ENCODE measurements at regions of chr16 and their contacts with region 1.

Region 1: GRCh38 chr16:58629572-58630104 is at the start of gene CNOT1:
- DNase-seq: peak; percentile 95 to 99 (median 98)
- H3K4me3 ChIP-seq: peak within 1 kb of the TSS; percentile 68 to 100 (median 96)
- H3K27ac ChIP-seq: peak within 1 kb of the TSS; percentile 88 to 100 (median 98)
- H3K27me3 ChIP-seq: no peaks in the 10 kb centered on the region
- CTCF ChIP-seq: peak in 6 of 56 donors; percentile 4 to 17 (median 9)
- total RNA-seq, gene CNOT1: 71.0 to 135 (median 100) TPM

Region 2: GRCh38 chr16:58392215-58393137 is 237.2 kb before region 1 on chr16 and contains the start of gene GINS3:
- intact Hi-C with region 1: loop called in 1 of 2 experiments (anchors 2 kb)
- DNase-seq: peak; percentile 83 to 94 (median 92)
- H3K4me3 ChIP-seq: peak within 1 kb of the TSS; percentile 56 to 100 (median 91)
- H3K27ac ChIP-seq: peak within 1 kb of the TSS in 54 of 59 donors; percentile 1 to 87 (median 63)
- H3K27me3 ChIP-seq: no peaks in the 10 kb centered on the region
- CTCF ChIP-seq: peak in 22 of 56 donors; percentile 4 to 42 (median 19)
- total RNA-seq, gene GINS3: 1.6 to 9.8 (median 3.4) TPM

Region 3: DNA sequence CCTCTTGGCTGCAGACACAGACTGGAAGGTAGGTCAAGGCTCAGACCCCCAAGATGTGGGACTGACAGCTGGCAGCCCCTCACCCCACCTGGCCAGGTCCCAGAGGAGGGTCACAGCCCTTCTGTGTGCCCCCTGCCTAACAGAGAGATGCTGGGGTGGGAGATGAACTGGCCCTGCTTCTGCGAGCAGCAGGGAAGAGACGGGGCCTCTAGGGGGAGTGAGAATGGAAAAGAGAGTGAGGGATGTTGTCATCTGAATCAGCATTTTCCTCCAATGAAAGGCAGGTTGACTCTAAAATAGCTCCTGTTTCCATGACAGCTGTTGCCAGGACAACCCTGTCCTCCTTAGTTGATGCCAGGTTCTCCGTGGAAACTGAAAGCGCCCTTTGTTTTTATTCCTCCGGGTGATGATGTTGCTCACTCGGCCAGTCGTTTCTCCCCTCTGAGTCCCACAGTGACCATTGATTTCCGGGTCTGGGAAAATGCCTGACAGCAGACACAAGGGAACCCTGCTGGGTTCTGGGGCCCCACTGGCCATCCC is 134.6 kb before region 1 on chr16:
- intact Hi-C with region 1: loop called in 1 of 2 experiments (anchors 5 kb)
- DNase-seq: peak in 9 of 10 donors; percentile 78 to 97 (median 89)
- H3K4me3 ChIP-seq: peak overlapping the region in 58 of 59 donors; percentile 5 to 64 (median 44)
- H3K27ac ChIP-seq: peak overlapping the region; percentile 81 to 100 (median 97)
- H3K27me3 ChIP-seq: no peaks in the 10 kb centered on the region
- CTCF ChIP-seq: peak in 55 of 56 donors; percentile 41 to 78 (median 66)

Region 4: DNA sequence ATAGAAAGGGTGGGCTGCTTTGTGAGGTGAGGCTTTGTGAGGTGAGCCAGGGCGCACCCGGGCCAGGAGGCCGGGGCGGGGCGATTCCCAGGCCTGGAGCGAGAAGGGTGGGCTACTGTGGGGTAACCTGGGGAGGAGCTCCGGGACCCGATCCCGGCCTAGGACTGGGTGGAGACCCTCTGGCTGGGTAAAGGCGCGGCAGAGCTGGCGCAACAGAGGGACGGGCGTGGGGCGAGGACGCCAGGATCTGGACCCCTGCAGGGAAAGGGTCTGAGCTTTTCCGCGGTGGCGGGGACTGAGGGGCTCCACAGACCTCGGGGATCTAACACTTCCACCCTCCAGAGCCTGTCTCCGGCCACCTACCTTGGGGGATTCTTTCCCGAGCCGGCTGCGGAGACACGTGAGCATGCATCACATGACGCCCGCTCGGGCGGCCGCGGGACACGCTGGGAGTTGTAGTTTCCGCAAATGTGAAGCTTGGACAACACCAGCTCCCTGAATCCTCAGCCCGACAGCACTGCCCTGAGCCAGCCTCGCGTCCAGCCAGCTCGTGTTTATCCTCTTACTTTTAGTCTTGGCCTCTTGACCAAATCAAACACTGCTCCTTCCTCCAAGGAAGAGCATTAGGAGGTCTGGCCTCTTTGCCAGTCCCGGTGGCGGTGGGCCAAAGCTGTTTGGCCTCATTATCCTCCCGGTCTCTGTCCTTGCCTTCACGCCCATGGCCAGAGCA is 54.9 kb after region 1 on chr16 and contains the start of gene SLC38A7:
- intact Hi-C with region 1: loop called in 1 of 2 experiments (anchors 2 kb)
- DNase-seq: peak; percentile 88 to 95 (median 92)
- H3K4me3 ChIP-seq: peak within 1 kb of the TSS; percentile 57 to 100 (median 93)
- H3K27ac ChIP-seq: peak within 1 kb of the TSS in 57 of 59 donors; percentile 7 to 94 (median 79)
- H3K27me3 ChIP-seq: no peaks in the 10 kb centered on the region
- CTCF ChIP-seq: peak in 23 of 56 donors; percentile 14 to 48 (median 24)
- total RNA-seq, gene SLC38A7: 17.4 to 52.1 (median 28.9) TPM

Region 5: DNA sequence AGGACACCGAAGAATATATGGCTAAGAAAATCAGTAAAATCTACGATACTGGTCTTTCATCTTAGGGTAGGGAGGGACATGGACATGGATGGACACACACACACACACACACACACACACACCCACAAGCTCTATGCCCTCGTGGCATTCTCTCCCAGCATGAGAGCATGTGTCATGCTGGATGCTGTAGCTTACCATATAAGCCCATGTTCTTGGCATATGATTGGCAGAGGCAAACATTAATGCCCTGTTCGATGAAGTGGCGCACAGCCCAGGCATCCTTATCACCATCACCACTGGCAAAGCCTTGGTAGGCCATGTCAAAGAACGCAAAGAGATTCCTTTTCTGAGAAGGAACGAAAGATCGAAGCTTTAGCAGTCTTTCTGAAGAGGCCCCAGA is 86.8 kb after region 1 on chr16:
- intact Hi-C with region 1: no loop called
- DNase-seq: no peak
- H3K4me3 ChIP-seq: no peak overlapping the region
- H3K27ac ChIP-seq: no peak overlapping the region
- H3K27me3 ChIP-seq: no peaks in the 10 kb centered on the region
- CTCF ChIP-seq: no peak

Region 6: GRCh38 chr16:58733671-58734458 is 104.2 kb after region 1 on chr16 and contains the start of gene GOT2:
- intact Hi-C with region 1: loop called in 1 of 2 experiments (anchors 5 kb)
- DNase-seq: peak; percentile 61 to 89 (median 78)
- H3K4me3 ChIP-seq: peak within 1 kb of the TSS; percentile 65 to 98 (median 90)
- H3K27ac ChIP-seq: peak within 1 kb of the TSS; percentile 8 to 96 (median 84)
- H3K27me3 ChIP-seq: no peaks in the 10 kb centered on the region
- CTCF ChIP-seq: peak; percentile 65 to 96 (median 90)
- total RNA-seq, gene GOT2: 73.7 to 189 (median 145) TPM

Region 7: GRCh38 chr16:58828901-58829545 is 199.4 kb after region 1 on chr16:
- intact Hi-C with region 1: no loop called
- DNase-seq: no peak
- H3K4me3 ChIP-seq: no peak overlapping the region
- H3K27ac ChIP-seq: no peak overlapping the region
- H3K27me3 ChIP-seq: no peaks in the 10 kb centered on the region
- CTCF ChIP-seq: no peak

Measured in dorsolateral prefrontal cortex (tissue), 120 donors.